Right ventricle myocardium inferior (tissue), 1 donor: ENCODE measurements at regions of chr5 and their contacts with region 1.

Region 1: DNA sequence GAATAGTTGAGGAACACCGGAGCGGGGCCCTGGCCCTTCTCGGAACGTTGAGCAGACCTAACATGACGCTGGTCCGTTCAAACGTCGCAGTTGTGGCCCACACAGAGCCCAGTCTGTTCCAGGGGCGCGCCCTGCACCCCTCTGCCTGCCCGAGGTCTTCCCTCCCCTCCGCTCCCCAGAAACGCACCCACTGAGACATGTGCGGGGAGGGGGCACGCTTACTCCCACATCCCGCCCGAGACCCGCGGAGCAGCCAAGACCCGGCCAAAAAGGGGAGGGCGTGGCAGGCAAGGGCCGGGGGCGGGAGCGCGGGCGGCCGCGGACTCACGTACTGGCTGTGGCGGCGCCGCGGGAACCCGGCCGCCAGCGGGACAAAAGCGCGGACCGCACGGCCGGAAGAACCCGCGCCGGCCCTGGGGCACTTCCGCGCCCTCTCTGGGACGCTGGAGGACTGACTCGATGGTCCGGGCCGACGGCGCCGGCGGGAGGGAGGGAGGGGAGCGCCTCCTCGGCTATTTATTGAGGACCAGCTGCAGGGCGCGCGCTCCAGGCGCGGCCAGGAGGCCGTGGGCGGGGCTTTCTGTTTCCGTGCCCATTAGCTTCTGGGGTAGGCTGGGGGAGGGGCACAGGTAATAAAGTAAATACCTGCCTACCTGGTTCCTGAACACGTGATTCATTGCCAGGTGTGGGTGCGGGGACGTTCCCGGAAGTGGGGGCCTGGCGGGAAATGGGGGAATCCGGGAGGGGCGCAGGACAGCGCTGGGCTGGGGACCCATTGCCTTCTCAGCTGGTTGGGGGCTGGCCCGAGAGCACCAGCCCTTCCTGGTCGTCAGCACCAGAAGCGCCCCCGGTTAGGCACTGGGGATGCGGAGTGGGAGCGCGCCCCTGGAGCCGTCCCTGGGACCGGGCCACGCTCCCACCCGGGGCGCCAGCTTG is at the start of gene ZFP62:
- DNase-seq: peak; percentile 97
- ATAC-seq: peak; percentile 98
- total RNA-seq, gene ZFP62: 14.7 TPM

Region 2: DNA sequence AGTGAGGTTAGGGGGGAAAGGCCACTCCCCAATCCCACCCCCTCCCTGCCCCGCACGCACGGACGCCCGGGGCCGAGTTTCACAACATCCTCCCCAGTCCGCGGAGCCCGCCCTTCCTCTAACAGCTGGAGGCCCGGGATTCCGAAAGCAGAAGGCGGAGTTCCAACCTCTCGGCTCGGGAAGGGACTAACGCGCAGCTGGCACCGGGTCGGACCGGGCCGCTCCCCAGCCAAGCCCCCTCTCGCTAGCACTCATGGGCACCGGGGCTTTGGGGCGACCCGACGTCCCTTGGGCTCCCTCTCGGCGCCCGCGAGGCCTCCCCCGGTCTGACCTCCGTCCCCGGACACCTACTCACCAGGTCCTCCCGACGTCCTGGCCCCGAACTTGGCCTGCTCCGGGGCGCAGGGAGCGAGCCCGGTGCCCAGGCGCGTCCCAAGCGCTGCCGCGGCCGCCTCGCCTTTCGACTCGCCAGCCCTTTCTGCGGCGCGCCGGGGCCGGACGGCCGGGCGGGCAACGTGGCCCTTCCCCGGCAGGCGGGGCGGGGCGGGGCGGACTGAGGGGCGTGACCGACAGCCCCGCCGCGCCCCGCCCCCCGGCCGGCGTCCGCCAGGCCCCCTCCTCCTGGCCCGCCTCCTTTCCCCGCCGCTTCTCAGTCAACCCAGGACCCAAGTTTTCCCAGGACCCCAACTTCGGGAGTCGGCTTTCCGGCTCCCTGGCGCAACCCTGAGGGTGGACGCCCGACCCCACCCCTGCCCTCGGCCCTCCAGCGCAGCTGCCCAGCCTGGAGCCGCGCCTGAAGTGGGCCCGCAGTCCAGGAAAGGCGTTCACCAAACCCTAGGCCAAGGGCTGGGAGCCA is 58.6 kb before region 1 on chr5 and contains the start of gene MGAT1:
- intact Hi-C with region 1: loop called (anchors 5 kb)
- DNase-seq: peak; percentile 95
- ATAC-seq: peak; percentile 89
- total RNA-seq, gene MGAT1: 76.0 TPM

Region 3: GRCh38 chr5:180810210-180810958 is 50.8 kb before region 1 on chr5:
- intact Hi-C with region 1: loop called (anchors 5 kb)
- DNase-seq: peak; percentile 98
- ATAC-seq: peak; percentile 96

Region 4: DNA sequence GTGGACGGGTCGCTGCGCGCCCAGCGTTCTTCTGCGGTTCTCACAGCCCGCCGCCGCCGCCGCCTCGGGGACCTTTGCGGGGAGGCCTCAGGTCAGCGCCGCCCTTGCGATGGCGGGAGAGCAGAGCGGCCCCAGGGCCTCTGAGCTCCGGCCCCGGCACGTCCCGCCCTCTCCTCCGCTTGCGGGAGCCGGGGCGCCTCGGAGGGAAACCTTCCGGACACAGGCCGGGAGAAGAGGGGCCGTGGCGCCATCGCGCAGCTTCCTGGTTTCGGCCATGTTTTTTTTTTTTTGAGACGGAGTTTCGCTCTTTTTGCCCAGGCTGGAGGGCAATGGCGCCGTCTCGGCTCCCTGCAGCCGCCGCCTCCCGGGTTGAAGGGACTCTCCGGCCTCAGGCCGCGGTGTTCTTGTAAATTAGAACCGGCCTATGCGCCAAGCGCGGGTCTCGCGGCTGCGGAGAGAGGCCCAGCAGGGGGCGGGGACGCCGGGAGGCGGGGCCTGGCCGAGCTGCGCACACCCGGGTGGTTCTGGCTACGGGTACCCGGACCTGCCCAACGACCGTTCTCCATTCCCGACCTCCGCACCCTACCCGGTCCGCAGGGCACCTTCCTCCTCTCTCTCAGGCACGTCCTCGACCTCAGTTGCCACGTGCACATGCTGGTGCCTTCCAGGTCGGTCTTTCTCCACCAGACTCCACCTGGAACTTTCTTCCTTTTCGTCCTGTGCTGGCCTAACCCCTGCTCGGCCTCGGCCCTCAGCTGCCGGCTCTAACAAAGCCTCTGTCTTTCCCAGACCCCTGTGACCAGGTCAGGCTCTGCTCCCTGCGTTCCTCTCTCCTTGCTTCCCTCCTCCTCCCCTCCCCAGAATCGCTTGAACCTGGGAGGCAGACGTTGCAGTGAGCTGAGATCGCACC is 29.8 kb before region 1 on chr5:
- intact Hi-C with region 1: loop called (anchors 1 kb)
- DNase-seq: peak; percentile 96
- ATAC-seq: peak; percentile 99

Region 5: GRCh38 chr5:181024245-181025064 is 163.3 kb after region 1 on chr5:
- intact Hi-C with region 1: no loop called
- DNase-seq: no peak
- ATAC-seq: no peak

Region 6: DNA sequence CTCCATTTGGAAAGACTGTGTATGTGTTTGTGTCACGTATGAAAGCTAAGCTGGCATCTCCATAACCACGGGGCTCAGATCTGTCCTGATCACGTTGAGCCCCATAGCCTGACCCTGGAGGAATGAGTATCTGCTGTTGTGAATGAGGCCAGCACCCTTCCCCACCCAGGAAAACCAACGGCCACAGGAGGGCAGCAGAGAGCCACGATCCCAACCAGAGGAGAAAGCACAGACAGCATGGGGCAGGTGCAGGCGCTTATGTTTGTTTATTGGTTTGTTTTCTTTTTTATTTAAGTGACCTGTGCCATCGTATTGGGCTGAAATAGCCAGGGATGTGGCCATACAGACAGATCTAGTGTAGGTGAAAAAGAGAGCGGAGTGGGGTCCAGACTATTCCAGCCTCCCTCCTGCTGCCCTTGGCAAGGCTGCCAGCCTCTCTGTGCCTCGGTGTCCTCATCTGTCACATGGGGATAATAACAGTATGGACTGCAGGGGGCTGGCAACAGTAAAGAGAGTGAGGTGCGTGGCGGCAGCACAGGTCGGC is 298.2 kb after region 1 on chr5:
- intact Hi-C with region 1: loop called (anchors 10 kb)
- DNase-seq: peak; percentile 91
- ATAC-seq: peak; percentile 94